K562 (cell line): ENCODE measurements at regions of chr2 and their contacts with region 1.

Region 1: GRCh38 chr2:187499941-187500532 is 52.0 kb upstream of the CALCRL start:
- DNase-seq: peak; percentile 45 to 77 (median 56)
- ATAC-seq: peak; percentile 87
- H3K4me3 ChIP-seq: no peak overlapping the region
- H3K27ac ChIP-seq: no peak overlapping the region
- H3K4me1 ChIP-seq: peaks cover 0 to 12% of the 10 kb centered on the region in 2 experiments; a peak in 3 of 5 replicates
- H3K27me3 ChIP-seq: no peaks in the 10 kb centered on the region
- CTCF ChIP-seq: peak; percentile 71 to 97 (median 84)
- EP300 ChIP-seq: no peak
- POLR2A ChIP-seq: no peak
- RAD21 ChIP-seq: peak; percentile 99 to 100

Region 2: GRCh38 chr2:186862869-186863709 is 636.9 kb before region 1 on chr2:
- CTCF ChIA-PET with region 1: interaction called, 3 read pairs
- POLR2A ChIA-PET with region 1: no interaction called
- in situ Hi-C with region 1: no loop called
- intact Hi-C with region 1: loop called (anchors 5 kb)
- DNase-seq: peak; percentile 34 to 59 (median 36)
- ATAC-seq: peak; percentile 91
- H3K4me3 ChIP-seq: no peak overlapping the region
- H3K27ac ChIP-seq: no peak overlapping the region
- H3K4me1 ChIP-seq: no peaks in the 10 kb centered on the region
- H3K27me3 ChIP-seq: no peaks in the 10 kb centered on the region
- CTCF ChIP-seq: peak; percentile 47 to 87 (median 50); a peak in 4 of 6 replicates
- EP300 ChIP-seq: no peak
- POLR2A ChIP-seq: no peak
- RAD21 ChIP-seq: peak; percentile 90 to 94

Region 3: GRCh38 chr2:187654535-187654934 is 154.5 kb after region 1 on chr2:
- CTCF ChIA-PET with region 1: no interaction called
- POLR2A ChIA-PET with region 1: no interaction called
- in situ Hi-C with region 1: no loop called
- intact Hi-C with region 1: loop called (anchors 5 kb)
- DNase-seq: peak in 2 of 4 experiments; percentile 9 to 30
- ATAC-seq: peak; percentile 52
- H3K4me3 ChIP-seq: peak overlapping the region; percentile 12; the same call in 1 of the 2 replicates
- H3K27ac ChIP-seq: no peak overlapping the region; the same call in 2 of the 3 replicates
- H3K4me1 ChIP-seq: no peaks in the 10 kb centered on the region
- H3K27me3 ChIP-seq: no peaks in the 10 kb centered on the region
- CTCF ChIP-seq: no peak
- EP300 ChIP-seq: no peak
- POLR2A ChIP-seq: no peak
- RAD21 ChIP-seq: no peak

Region 4: GRCh38 chr2:187749804-187750431 is 249.9 kb after region 1 on chr2:
- CTCF ChIA-PET with region 1: no interaction called
- POLR2A ChIA-PET with region 1: no interaction called
- in situ Hi-C with region 1: no loop called
- intact Hi-C with region 1: loop called (anchors 10 kb)
- DNase-seq: no peak
- ATAC-seq: no peak
- H3K4me3 ChIP-seq: no peak overlapping the region
- H3K27ac ChIP-seq: no peak overlapping the region
- H3K4me1 ChIP-seq: no peaks in the 10 kb centered on the region
- H3K27me3 ChIP-seq: no peaks in the 10 kb centered on the region
- CTCF ChIP-seq: no peak
- EP300 ChIP-seq: no peak
- POLR2A ChIP-seq: no peak
- RAD21 ChIP-seq: no peak

Region 5: DNA sequence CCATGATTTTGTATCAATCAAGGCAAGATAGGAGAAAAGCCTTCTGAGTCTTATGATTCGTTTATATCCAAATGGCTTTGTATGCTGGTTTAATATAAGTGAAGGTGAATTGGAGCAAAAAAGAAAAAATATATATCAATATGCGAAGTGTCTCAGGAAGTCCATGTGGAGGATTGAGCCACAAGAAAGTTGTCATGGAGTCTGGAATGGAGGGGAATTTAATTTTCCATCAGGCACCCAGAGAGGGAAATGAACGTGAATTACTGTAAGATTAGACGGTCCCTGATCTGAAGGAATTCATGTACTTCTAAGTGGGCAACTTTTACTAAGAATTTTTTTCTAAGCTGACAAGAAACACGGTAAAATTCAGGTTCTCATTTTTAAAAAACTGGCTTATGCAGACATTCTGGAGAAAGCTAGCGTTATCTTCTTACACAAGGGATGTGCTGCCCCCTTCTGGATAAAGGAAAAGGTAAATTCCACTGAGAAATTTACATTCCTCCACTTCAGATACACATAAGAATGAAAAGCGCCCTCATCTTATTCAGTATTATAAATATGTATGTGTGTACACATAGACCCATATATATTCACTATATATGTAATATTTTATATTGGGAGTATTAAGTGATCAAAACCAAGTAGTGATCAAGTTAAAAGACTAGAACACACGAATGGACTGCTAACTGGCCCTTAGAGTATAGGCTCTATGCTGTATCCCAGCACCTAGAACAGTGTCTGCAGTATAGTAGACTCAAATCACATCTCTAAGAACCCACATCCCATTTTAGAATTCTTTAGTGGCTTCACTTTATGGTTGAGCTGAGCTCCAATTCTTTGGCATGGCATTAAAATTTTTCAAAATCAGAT is 343.2 kb after region 1 on chr2:
- CTCF ChIA-PET with region 1: interaction called, 24 read pairs
- POLR2A ChIA-PET with region 1: no interaction called
- in situ Hi-C with region 1: loop called (anchors 25 kb)
- intact Hi-C with region 1: loop called (anchors 1 kb)
- DNase-seq: peak; percentile 9 to 57 (median 19)
- ATAC-seq: peak; percentile 75
- H3K4me3 ChIP-seq: no peak overlapping the region
- H3K27ac ChIP-seq: no peak overlapping the region
- H3K4me1 ChIP-seq: no peaks in the 10 kb centered on the region
- H3K27me3 ChIP-seq: no peaks in the 10 kb centered on the region
- CTCF ChIP-seq: peak; percentile 34 to 61 (median 46); a peak in 5 of 6 replicates
- EP300 ChIP-seq: no peak
- POLR2A ChIP-seq: no peak
- RAD21 ChIP-seq: peak; percentile 46 to 71

Region 6: GRCh38 chr2:188512456-188512855 is 1012.4 kb after region 1 on chr2:
- CTCF ChIA-PET with region 1: no interaction called
- POLR2A ChIA-PET with region 1: no interaction called
- in situ Hi-C with region 1: no loop called
- intact Hi-C with region 1: loop called (anchors 5 kb)
- DNase-seq: peak in 2 of 4 experiments; percentile 4 to 35
- ATAC-seq: peak; percentile 76
- H3K4me3 ChIP-seq: no peak overlapping the region
- H3K27ac ChIP-seq: no peak overlapping the region
- H3K4me1 ChIP-seq: no peaks in the 10 kb centered on the region
- H3K27me3 ChIP-seq: no peaks in the 10 kb centered on the region
- CTCF ChIP-seq: peak in 2 of 3 experiments; percentile 23 to 59; a peak in 3 of 6 replicates
- EP300 ChIP-seq: no peak
- POLR2A ChIP-seq: no peak
- RAD21 ChIP-seq: peak; percentile 72